Body of pancreas (tissue), 4 donors: ENCODE measurements at regions of chr19 and their contacts with region 1.

Region 1: DNA sequence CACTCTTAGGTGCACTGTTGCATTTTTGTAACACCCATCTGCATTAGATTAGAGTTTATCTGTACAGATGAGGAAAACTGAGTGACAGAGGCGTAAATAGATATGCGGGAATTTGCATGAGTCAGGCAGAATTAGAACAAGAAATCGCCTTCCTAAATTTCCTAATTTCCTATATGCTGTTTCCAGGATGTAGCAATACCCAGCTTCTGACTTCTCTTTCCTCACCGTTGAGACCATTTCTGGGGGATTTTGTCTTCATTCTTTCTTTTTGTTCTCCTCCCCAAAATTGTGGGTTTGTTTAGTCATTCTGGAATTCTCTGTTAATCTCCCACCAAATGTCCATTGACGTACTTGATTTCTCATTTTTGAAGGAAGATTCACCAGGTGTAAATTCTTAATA is 10.6 kb upstream of the ZNF792 start:
- DNase-seq: no peak
- ATAC-seq: no peak
- H3K4me3 ChIP-seq: no peak overlapping the region
- H3K27ac ChIP-seq: no peak overlapping the region
- H3K4me1 ChIP-seq: no peaks in the 10 kb centered on the region
- H3K27me3 ChIP-seq: no peaks in the 10 kb centered on the region
- CTCF ChIP-seq: no peak
- POLR2A ChIP-seq: no peak

Region 2: DNA sequence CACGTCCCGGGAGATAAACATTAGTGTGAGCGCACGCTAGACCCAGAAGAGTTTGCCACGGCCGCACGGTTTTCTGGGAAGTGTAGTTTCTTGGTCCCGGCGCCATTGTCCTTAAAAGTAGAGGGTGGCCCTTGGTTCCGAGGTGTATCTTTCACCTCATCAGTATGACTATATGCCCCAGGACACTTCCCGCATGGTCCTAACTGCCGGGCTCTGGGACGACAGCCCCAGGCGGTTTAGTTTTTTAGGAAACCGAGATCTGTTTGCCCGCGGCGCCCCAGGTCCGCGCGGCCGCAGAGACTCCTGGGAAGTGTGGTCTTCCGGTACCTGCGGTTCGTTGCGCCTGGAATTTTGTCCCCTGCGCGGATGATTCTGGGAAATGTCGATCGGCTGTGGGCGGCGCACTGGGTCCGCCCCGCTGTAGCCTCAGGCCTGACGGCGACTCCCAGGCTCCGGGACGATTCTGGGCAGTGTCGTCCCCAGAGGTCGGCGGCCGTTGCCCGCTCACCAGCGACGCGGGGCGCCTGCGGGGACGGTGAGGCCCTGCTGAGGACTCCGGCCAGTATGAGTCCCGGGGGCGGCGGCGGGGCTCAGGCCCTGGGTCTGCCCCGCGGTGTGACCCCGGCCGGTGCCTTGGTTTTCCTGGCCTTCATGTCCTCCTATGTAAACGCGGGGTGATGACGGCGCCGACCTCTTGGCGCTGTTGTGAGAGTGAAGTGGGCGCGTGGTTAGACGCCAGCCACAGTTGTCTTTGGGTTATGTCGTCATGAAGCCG is 240.6 kb before region 1 on chr19 and contains the start of gene ZNF181:
- intact Hi-C with region 1: no loop called
- DNase-seq: peak; percentile 88 to 94 (median 92)
- ATAC-seq: peak; percentile 89
- H3K4me3 ChIP-seq: peak within 1 kb of the TSS; percentile 52 to 70
- H3K27ac ChIP-seq: peak within 1 kb of the TSS; percentile 93 to 99 (median 98)
- H3K4me1 ChIP-seq: peaks cover 35% of the 10 kb centered on the region
- H3K27me3 ChIP-seq: no peaks in the 10 kb centered on the region
- CTCF ChIP-seq: peak in 1 of 7 experiments; percentile 8
- POLR2A ChIP-seq: peak; percentile 83 to 88 (median 87)
- total RNA-seq, gene ZNF181: 11.9 to 38.6 TPM

Region 3: GRCh38 chr19:35013031-35013819 is 38.6 kb after region 1 on chr19:
- intact Hi-C with region 1: loop called (anchors 2 kb)
- DNase-seq: peak; percentile 75 to 79 (median 78)
- ATAC-seq: peak; percentile 81
- H3K4me3 ChIP-seq: no peak overlapping the region
- H3K27ac ChIP-seq: peak overlapping the region in 1 of 4 donors; percentile 30
- H3K4me1 ChIP-seq: peaks cover 17% of the 10 kb centered on the region
- H3K27me3 ChIP-seq: no peaks in the 10 kb centered on the region
- CTCF ChIP-seq: peak; percentile 83 to 99 (median 95)
- POLR2A ChIP-seq: no peak

Region 4: DNA sequence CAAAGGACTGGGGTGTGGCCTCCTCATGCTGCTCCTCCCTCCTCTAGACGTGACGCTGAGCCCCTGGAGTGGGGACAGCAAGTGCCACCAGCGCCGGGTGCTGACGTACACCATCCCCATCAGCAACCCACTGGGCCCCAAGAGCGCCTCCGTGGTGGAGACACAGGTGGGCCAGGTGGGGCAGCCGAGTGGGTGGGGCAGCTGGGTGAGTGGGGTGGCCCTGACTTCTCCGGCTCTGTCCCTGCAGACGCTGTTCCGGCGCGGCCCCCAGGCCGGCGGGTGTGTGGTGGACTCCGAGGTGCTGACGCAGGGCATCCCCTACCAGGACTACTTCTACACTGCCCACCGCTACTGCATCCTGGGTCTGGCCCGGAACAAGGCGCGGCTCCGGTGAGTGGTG is 44.5 kb after region 1 on chr19:
- intact Hi-C with region 1: loop called (anchors 2 kb)
- DNase-seq: no peak
- ATAC-seq: no peak
- H3K4me3 ChIP-seq: no peak overlapping the region
- H3K27ac ChIP-seq: no peak overlapping the region
- H3K4me1 ChIP-seq: no peaks in the 10 kb centered on the region
- H3K27me3 ChIP-seq: no peaks in the 10 kb centered on the region
- CTCF ChIP-seq: no peak
- POLR2A ChIP-seq: no peak